Activated CD4-positive, alpha-beta T cell treated with anti-CD3 and anti-CD28 coated beads, Interleukin-2, amount 10 ng/mL, durations not matched to agents 24 days and 14 days (primary cell): ENCODE measurements at regions of chr10 and their contacts with region 1.

Region 1: DNA sequence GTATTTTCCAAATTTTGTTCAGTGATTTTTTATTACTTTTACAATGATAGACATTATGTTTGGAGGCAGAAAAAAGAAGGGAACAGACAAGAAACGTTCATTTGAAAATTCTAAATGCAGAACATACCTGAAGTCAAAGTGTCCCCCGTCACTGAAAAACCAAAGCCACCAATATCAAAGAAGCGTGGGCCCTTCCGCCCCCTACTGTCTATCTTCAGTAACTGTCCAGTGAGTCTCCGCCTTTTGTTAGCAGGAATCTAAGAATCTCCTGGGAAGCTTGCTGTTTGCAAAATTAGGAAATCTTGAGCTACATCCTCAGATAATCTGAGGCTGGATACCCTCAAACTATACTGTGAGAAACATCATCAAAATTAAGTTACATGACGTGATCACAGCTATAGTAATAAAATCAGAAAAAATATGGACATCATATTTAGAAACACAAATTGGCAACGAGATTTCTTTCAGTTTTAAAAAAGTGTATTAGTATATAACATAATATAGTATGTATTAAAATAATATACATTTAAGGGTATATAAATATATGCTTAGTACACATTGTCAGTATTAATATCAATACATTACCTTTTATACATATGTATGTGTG is 169.3 kb upstream of the AKR1E2 start:
- DNase-seq: peak; percentile 84
- H3K4me3 Mint-ChIP-seq: no peak overlapping the region
- H3K27ac Mint-ChIP-seq: no peak overlapping the region
- H3K4me1 Mint-ChIP-seq: peaks cover 10% of the 10 kb centered on the region
- H3K27me3 Mint-ChIP-seq: peaks cover 18% of the 10 kb centered on the region

Region 2: DNA sequence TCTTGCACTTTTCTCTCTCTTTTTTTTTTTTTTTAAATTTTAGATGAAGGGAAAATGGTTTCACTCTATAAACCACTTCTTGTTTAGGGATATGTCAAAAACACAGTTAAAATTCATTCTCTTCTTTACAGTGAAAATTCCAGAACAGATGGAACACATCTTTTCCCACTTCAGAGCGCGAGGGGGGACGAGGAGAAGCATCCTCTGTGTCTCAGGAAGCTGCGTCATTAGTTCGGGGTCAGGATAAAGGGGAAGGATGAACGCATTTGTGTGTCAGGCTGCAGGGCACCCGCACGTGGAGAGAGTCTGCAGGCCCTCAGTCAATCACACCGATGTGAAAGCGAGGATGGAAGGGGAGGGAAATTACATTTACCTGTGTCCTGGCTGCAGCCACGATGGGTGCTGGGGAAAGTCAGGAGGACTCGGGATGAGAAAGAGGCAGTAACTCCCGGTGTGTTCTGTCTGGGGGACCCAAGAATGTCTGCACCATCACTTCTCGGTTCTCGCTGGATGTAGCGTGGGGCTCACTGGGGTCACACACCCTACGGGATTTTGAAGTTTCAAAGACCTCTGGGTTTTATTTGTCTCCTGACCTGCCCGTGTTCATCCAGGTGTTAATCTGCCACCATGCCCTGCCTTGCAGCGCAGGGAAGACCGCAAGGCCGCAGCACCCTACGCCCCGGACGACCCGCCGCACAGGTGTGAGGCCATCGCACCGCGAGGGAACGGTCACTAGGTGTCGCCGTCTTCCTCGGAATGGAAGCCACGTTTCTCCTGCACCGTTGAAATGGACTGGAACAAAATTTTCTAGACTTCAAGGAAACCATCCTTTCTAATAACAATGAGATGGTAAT is 1417.4 kb before region 1 on chr10:
- intact Hi-C with region 1: loop called (anchors 2 kb)
- DNase-seq: peak; percentile 92
- H3K4me3 Mint-ChIP-seq: no peak overlapping the region
- H3K27ac Mint-ChIP-seq: no peak overlapping the region
- H3K4me1 Mint-ChIP-seq: peaks cover 3% of the 10 kb centered on the region
- H3K27me3 Mint-ChIP-seq: peaks cover 49% of the 10 kb centered on the region

Region 3: GRCh38 chr10:3785257-3785850 is 871.3 kb before region 1 on chr10:
- intact Hi-C with region 1: loop called (anchors 2 kb)
- DNase-seq: peak; percentile 100
- H3K4me3 Mint-ChIP-seq: peak overlapping the region; percentile 91
- H3K27ac Mint-ChIP-seq: peak overlapping the region; percentile 99
- H3K4me1 Mint-ChIP-seq: peaks cover 48% of the 10 kb centered on the region
- H3K27me3 Mint-ChIP-seq: no peaks in the 10 kb centered on the region

Region 4: DNA sequence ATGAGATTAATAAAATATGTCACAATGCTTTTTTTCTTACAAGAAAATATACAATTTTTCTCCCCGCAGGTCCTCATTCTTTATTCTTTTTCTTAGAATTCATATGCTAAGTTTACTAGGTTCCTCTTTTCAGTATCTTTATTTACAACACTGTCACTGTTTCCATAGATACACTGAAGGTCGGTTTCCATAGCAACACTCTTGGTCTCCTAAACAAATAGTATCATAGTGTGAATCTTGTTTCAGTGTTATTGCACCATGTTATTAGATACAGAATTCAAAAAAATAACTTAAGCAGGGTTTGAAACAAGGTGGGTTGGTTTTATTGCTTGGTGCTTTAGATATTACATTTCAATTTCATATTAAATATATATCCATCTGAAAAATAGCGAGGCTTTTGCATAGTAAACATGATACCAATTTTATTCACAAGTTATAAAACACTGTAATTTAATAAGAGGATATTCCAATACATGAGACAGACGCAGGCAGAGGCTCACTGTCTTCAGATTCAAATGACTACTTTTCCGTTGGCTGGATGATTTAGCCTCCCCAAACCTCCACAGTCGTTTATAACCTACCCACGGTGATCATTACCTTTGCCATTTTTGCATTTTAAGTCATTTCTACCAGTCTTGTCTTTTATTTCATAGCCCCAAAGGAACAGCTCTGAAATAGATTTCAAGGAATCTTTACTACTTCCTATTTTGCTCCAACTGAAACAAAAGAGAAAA is 782.8 kb before region 1 on chr10:
- intact Hi-C with region 1: loop called (anchors 10 kb)
- DNase-seq: peak; percentile 81
- H3K4me3 Mint-ChIP-seq: peak overlapping the region; percentile 14
- H3K27ac Mint-ChIP-seq: peak overlapping the region; percentile 88
- H3K4me1 Mint-ChIP-seq: peaks cover 52% of the 10 kb centered on the region
- H3K27me3 Mint-ChIP-seq: no peaks in the 10 kb centered on the region

Region 5: GRCh38 chr10:4131407-4132228 is 525.1 kb before region 1 on chr10:
- intact Hi-C with region 1: loop called (anchors 1 kb)
- DNase-seq: peak; percentile 85
- H3K4me3 Mint-ChIP-seq: no peak overlapping the region
- H3K27ac Mint-ChIP-seq: no peak overlapping the region
- H3K4me1 Mint-ChIP-seq: peaks cover 50% of the 10 kb centered on the region
- H3K27me3 Mint-ChIP-seq: no peaks in the 10 kb centered on the region

Region 6: DNA sequence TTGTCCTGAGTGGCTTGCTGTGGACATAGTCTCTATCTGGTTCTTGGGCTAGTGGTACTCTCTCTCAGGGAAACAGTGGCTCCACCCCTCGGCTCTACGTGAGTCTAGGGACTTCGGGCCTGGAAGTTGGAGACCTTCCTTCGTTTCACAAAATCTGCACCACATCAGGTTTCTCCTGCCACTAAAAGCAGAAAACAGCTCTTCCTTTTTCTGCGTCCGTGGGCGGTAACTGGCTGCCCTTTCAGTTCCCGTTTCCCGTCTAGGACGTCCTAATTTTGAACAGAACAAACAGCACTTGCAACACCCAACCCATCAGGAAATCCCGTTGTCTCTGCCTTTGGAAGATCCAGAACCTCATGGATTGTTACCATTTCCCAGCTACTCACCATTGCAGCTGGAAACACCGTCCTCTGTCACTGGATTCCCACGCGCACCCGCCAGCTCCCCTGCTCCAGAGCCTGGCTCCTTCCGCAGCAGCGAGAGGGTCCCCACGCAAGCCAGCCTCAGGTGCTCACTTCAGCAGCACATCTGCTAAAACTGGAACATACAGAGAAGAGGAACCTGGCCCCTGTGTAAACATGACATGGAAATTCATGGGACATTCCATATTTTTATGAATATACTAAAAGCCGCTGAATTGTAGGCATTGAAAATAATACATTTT is 142.1 kb before region 1 on chr10:
- intact Hi-C with region 1: no loop called
- DNase-seq: no peak
- H3K4me3 Mint-ChIP-seq: no peak overlapping the region
- H3K27ac Mint-ChIP-seq: no peak overlapping the region
- H3K4me1 Mint-ChIP-seq: peaks cover 8% of the 10 kb centered on the region
- H3K27me3 Mint-ChIP-seq: peaks cover 24% of the 10 kb centered on the region

Region 7: GRCh38 chr10:4635388-4635787 is 21.3 kb before region 1 on chr10:
- intact Hi-C with region 1: no loop called
- DNase-seq: no peak
- H3K4me3 Mint-ChIP-seq: no peak overlapping the region
- H3K27ac Mint-ChIP-seq: no peak overlapping the region
- H3K4me1 Mint-ChIP-seq: no peaks in the 10 kb centered on the region
- H3K27me3 Mint-ChIP-seq: peaks cover 3% of the 10 kb centered on the region

Region 8: GRCh38 chr10:5002013-5002727 is 345.5 kb after region 1 on chr10:
- intact Hi-C with region 1: no loop called
- DNase-seq: peak; percentile 6
- H3K4me3 Mint-ChIP-seq: no peak overlapping the region
- H3K27ac Mint-ChIP-seq: no peak overlapping the region
- H3K4me1 Mint-ChIP-seq: no peaks in the 10 kb centered on the region
- H3K27me3 Mint-ChIP-seq: no peaks in the 10 kb centered on the region